ENCODE measurements at regions of chr3 and their contacts with region 1.

Region 1: GRCh38 chr3:142226484-142226883 is 1.1 kb upstream of the GK5 start:
- DNase-seq: no peak
- H3K4me3 Mint-ChIP-seq: no peak overlapping the region
- H3K27ac Mint-ChIP-seq: no peak overlapping the region
- H3K4me1 Mint-ChIP-seq: peaks cover 19% of the 10 kb centered on the region
- H3K27me3 Mint-ChIP-seq: no peaks in the 10 kb centered on the region

Region 2: DNA sequence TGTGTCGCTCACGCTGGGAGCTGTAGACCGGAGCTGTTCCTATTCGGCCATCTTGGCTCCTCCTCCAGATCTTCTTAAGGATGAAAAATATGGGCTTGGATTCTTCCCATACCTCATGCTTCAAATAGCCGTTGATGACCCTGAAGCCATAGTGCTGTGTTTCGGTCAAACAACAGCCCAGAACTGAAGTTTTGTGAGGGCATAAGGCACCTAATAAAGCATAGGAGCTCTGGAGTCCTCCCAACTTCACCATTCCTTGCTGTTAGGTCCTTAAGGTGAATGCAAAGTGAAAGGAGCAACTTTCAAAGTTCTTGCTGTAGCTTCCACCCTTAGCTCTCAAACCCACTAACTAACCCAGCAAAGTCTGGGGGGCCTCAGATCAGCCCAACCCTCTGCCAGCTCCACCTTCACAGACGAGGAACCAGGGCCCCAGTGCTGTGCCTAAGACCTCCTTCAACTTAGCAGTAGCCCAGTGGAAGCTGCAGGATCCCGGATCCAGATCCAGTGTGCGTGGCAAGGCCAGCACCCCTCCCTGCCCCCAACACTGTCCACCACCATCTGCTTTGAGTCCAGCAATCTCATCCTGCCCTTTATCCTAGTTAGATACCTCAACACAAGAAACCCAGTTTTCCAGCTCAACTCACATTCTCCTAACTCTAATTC is 463.3 kb before region 1 on chr3 and contains the start of gene GRK7:
- CTCF ChIA-PET with region 1: no interaction called
- intact Hi-C with region 1: no loop called
- DNase-seq: no peak
- H3K4me3 Mint-ChIP-seq: no peak within 1 kb of the TSS
- H3K27ac Mint-ChIP-seq: no peak within 1 kb of the TSS
- H3K4me1 Mint-ChIP-seq: no peaks in the 10 kb centered on the region
- H3K27me3 Mint-ChIP-seq: no peaks in the 10 kb centered on the region
- total RNA-seq, gene GRK7: not detected

Region 3: DNA sequence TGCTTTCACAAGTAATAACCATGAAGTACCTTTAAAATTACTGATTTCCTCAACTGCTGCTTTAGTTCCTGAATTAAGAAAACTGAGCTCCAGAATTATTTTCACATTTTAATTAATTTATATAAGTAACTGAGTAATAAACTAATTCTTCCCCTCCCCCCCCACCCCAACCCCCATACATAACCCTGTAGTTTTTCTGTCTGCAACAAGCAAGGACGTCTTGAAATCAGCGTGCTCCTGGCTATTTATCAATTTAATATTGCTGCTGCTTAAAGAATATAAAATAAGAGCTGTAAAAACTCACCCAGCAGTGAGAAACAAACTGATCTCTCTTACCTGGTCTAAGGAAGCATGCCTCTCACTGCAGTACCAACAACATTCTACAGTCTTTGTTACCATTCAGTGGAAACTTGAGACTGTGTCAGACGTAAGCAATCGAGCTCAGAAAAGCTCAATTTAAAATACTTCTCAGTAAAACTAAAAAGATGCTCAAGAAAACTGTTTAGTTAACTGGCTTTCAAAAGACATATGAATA is 198.2 kb before region 1 on chr3:
- CTCF ChIA-PET with region 1: no interaction called
- intact Hi-C with region 1: loop called (anchors 1 kb)
- DNase-seq: peak; percentile 62
- H3K4me3 Mint-ChIP-seq: peak overlapping the region; percentile 80
- H3K27ac Mint-ChIP-seq: peak overlapping the region; percentile 73
- H3K4me1 Mint-ChIP-seq: peaks cover 24% of the 10 kb centered on the region
- H3K27me3 Mint-ChIP-seq: no peaks in the 10 kb centered on the region

Region 4: DNA sequence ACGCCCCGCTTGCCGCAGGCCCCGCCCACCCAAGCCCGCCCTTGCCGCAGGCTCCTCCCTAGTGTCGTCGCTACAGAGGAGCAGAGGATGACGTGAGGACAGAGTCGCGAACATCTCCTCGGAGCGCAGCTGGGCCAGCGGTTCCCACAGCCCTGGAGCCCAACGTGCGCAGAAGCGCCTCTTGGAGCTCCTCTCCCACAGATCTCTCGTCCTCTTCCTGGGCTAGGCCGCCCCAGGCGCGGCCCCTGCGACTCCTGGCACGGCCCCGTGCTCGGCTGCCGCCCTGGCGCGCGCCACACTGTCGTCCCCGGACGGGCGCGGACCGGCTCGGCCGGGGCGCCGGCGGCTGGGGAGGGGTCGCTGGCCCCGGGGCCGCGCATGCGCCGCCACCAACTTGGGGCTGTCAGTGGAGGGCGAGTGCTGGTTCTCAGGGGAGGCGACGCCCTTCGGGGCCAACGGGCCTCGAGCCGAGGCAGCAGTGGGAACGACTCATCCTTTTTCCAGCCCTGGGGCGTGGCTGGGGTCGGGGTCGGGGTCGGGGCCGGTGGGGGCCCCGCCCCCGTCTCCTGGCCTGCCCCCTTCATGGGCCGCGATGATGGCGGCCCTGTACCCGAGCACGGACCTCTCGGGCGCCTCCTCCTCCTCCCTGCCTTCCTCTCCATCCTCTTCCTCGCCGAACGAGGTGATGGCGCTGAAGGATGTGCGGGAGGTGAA is 497.6 kb after region 1 on chr3 and contains the start of gene TRPC1:
- CTCF ChIA-PET with region 1: no interaction called
- intact Hi-C with region 1: loop called (anchors 10 kb)
- DNase-seq: peak; percentile 57
- H3K4me3 Mint-ChIP-seq: peak within 1 kb of the TSS; percentile 83
- H3K27ac Mint-ChIP-seq: peak within 1 kb of the TSS; percentile 82
- H3K4me1 Mint-ChIP-seq: peaks cover 10% of the 10 kb centered on the region
- H3K27me3 Mint-ChIP-seq: peaks cover 20% of the 10 kb centered on the region
- total RNA-seq, gene TRPC1: 3.1 to 4.8 TPM

Measured in activated naive CD4-positive, alpha-beta T cell treated with anti-CD3 and anti-CD28 coated beads for 36 hours (primary cell).